Right cardiac atrium (tissue), 5 donors: ENCODE measurements at regions of chr4 and their contacts with region 1.

Region 1: GRCh38 chr4:174496631-174497432 is 25.5 kb downstream of the HPGD start:
- DNase-seq: no peak
- ATAC-seq: no peak
- H3K4me3 ChIP-seq: no peak overlapping the region
- H3K27ac ChIP-seq: no peak overlapping the region
- H3K4me1 ChIP-seq: no peaks in the 10 kb centered on the region
- H3K27me3 ChIP-seq: no peaks in the 10 kb centered on the region

Region 2: DNA sequence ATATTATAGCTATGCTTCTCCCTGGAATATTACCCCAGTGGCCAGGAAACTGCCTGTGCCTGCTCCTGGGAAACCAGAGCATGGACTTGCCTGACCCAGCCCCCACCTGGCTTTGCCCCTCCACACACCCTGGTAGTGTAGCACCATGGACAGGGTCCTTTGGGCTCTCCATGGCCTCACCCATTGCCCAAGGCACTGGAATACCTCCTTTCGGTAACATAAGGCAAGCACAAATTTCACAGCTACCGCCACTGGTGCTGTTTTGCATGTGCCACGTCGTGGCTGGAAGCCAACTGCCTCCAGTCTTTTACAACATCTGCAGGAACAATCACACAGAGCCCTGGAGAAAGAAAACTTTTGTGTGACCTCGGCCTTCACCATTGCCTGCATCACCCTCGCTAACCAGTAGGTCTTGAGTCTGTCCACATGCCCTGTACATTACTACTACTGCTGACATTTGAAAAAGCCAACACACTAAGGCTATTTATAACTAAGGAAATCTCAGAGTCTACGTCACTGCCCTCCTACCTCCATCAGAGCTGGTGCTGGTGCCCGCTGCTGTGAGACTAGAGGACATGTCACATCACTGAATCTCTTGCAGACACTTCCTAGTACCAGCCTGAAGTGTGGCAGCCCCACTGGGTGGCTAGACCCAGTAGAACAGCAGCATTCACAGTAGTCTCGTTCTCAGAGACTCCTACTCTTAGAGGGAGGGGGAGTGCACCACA is 22.2 kb before region 1 on chr4:
- intact Hi-C with region 1: loop called in 1 of 4 experiments (anchors 1 kb)
- DNase-seq: no peak
- ATAC-seq: no peak
- H3K4me3 ChIP-seq: no peak overlapping the region
- H3K27ac ChIP-seq: no peak overlapping the region
- H3K4me1 ChIP-seq: no peaks in the 10 kb centered on the region
- H3K27me3 ChIP-seq: no peaks in the 10 kb centered on the region